ENCODE measurements at regions of chr9 and their contacts with region 1.

Region 1: GRCh38 chr9:129783516-129784361 is 19.2 kb upstream of the TOR1B start:
- DNase-seq: peak; percentile 54
- H3K4me3 ChIP-seq: no peak overlapping the region
- H3K27ac ChIP-seq: no peak overlapping the region
- H3K4me1 ChIP-seq: no peaks in the 10 kb centered on the region
- H3K27me3 ChIP-seq: no peaks in the 10 kb centered on the region
- CTCF ChIP-seq: peak; percentile 88 to 95

Region 2: GRCh38 chr9:129641746-129642513 is 141.8 kb before region 1 on chr9 and contains the start of gene ASB6:
- CTCF ChIA-PET with region 1: no interaction called
- dilution Hi-C with region 1: no loop called
- in situ Hi-C with region 1: loop called (anchors 5 kb)
- intact Hi-C with region 1: loop called (anchors 1 kb)
- DNase-seq: peak; percentile 95
- H3K4me3 ChIP-seq: peak within 1 kb of the TSS; percentile 72 to 94 (median 80)
- H3K27ac ChIP-seq: peak within 1 kb of the TSS; percentile 45
- H3K4me1 ChIP-seq: peaks cover 19% of the 10 kb centered on the region
- H3K27me3 ChIP-seq: no peaks in the 10 kb centered on the region
- CTCF ChIP-seq: peak; percentile 78 to 96
- total RNA-seq, gene ASB6: 21.4 to 28.2 TPM

Region 3: DNA sequence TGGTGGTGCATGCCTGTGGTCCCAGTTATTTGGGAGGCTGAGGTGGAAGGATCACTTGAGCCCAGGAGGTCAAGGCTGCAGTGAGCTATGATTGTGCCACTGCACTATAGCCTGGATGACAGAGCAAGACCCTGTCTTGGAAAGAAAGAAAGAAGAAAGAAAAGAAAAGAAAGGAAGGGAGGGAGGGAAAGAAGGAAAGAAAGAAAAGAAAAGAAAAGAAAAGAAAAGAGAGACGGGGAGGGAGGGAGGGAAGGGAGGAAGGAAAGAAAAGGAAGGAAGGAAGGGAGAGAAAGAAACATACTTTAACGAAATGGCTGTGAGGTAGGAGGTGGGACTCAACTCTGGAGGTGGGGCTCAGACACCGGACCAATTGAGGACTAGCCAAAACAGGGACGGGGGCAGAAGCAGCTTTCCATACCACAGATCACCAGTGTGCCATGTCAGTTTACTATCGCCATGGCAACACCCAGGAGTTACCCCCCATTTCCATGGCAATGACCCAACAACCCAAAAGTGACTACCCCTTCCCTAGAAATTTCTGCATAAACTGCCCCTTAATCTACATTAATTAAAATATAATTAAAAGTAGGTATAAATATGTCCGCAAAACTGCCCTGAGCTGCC is 52.1 kb before region 1 on chr9:
- CTCF ChIA-PET with region 1: interaction called, 4 read pairs
- dilution Hi-C with region 1: loop called (anchors 5 kb)
- in situ Hi-C with region 1: loop called in 1 of 2 experiments (anchors 5 kb)
- intact Hi-C with region 1: loop called (anchors 1 kb)
- DNase-seq: no peak
- H3K4me3 ChIP-seq: no peak overlapping the region
- H3K27ac ChIP-seq: no peak overlapping the region
- H3K4me1 ChIP-seq: no peaks in the 10 kb centered on the region
- H3K27me3 ChIP-seq: no peaks in the 10 kb centered on the region
- CTCF ChIP-seq: no peak

Region 4: DNA sequence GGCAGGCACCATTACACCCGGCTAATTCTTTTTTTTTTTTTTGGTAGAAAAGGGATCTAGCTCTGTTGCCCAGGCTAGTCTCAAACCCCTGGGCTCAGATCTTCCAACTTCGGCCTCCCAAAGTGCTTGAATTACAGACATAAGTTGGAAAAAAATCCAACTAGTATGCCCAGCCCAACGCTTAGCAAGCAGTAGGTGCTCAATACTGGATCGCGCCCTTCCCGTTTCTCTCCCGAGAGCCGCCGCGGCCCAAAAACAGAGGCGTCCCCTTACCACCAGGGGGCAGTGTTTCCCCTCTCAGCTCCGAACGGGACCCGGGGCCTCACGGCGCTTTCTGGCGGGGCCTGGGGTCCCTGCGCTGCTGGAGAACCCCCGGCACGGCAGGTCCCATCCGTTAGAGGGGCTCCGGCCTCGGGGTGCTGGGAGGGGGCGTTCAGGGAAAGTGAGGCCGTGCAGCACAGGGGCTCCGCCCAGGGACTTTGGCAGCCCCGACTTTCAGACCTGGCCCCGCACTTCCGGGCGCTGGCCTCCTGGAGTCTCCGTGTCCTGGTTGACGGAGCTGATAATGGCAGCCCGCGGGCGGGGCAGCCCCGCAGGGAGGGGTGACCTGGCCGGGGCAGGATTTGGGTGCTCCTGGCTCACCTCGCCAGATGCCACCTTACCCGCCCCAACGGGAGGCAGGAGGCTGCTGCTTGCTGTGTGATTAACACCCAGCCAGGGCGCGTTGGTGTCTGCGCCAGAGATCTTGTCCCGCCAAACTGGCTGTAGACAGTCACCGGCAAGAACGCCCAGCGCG is 46.1 kb before region 1 on chr9:
- CTCF ChIA-PET with region 1: interaction called, 6 read pairs
- dilution Hi-C with region 1: no loop called
- in situ Hi-C with region 1: loop called (anchors 5 kb)
- intact Hi-C with region 1: loop called (anchors 1 kb)
- DNase-seq: peak; percentile 54
- H3K4me3 ChIP-seq: peak overlapping the region; percentile 14 to 44 (median 39)
- H3K27ac ChIP-seq: no peak overlapping the region
- H3K4me1 ChIP-seq: peaks cover 19% of the 10 kb centered on the region
- H3K27me3 ChIP-seq: no peaks in the 10 kb centered on the region
- CTCF ChIP-seq: peak; percentile 63 to 94

Region 5: DNA sequence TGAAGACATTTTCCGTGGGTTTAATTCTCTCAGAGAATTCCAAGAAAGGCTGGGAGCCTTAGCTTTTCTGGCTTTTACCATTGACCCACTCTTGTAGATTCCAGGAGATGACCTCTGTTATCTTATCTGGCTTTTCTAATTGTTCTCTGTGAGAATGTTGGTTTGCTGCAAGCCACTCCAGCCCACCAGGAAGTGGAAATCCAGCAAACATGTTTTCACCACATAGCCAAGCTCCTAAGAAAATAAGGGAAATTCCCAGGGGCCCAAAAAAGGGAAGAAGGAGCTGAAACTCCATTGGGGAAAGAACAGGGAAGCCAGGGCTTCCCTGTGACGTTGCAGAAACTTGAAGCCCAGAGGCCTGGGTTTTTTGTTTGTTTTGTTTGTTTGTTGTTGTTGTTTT is 289.6 kb after region 1 on chr9:
- CTCF ChIA-PET with region 1: no interaction called
- dilution Hi-C with region 1: no loop called
- in situ Hi-C with region 1: no loop called
- intact Hi-C with region 1: no loop called
- DNase-seq: no peak
- H3K4me3 ChIP-seq: no peak overlapping the region
- H3K27ac ChIP-seq: no peak overlapping the region
- H3K4me1 ChIP-seq: no peaks in the 10 kb centered on the region
- H3K27me3 ChIP-seq: no peaks in the 10 kb centered on the region
- CTCF ChIP-seq: no peak

Region 6: GRCh38 chr9:130118841-130119518 is 335.2 kb after region 1 on chr9:
- CTCF ChIA-PET with region 1: no interaction called
- dilution Hi-C with region 1: no loop called
- in situ Hi-C with region 1: no loop called
- intact Hi-C with region 1: no loop called
- DNase-seq: no peak
- H3K4me3 ChIP-seq: no peak overlapping the region
- H3K27ac ChIP-seq: no peak overlapping the region
- H3K4me1 ChIP-seq: peaks cover 11% of the 10 kb centered on the region
- H3K27me3 ChIP-seq: no peaks in the 10 kb centered on the region
- CTCF ChIP-seq: no peak

Region 7: DNA sequence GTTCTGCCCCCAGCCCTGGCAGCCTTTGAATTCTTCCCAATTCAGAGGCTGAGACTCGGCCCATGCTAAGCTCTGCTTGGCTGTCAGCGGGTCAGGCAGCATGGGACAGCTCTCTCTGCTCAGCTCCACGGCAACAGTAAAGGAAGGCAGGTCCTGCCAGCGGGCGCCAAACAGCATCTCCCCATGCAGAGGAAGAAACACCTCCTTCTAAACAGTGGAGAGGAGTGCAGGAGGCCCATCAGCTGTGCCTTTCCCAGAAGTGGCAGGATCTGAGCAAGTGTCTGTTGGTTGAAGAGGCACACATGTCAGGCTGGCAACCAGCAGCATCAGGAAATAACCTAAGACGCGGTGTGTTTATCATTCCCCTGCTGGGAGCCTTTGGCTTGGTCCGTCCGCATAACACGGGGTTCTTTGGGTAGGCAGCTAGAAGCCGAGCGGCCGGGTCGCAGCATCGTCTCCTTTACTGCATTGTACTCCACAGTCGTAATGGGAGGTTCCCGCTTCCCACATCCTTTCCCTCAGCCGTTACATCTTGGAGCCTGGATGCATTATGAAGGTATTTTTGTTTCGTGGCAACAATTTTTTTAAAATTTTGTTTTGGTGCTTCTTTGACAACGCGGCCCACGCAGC is 345.8 kb after region 1 on chr9:
- CTCF ChIA-PET with region 1: no interaction called
- dilution Hi-C with region 1: no loop called
- in situ Hi-C with region 1: no loop called
- intact Hi-C with region 1: no loop called
- DNase-seq: no peak
- H3K4me3 ChIP-seq: no peak overlapping the region
- H3K27ac ChIP-seq: no peak overlapping the region
- H3K4me1 ChIP-seq: peaks cover 14% of the 10 kb centered on the region
- H3K27me3 ChIP-seq: no peaks in the 10 kb centered on the region
- CTCF ChIP-seq: no peak